OCI-LY7 (cell line): ENCODE measurements at regions of chr2 and their contacts with region 1.

Region 1: GRCh38 chr2:11829947-11830707 is 83.7 kb downstream of the LPIN1 start:
- DNase-seq: peak; percentile 83
- H3K4me3 ChIP-seq: peak overlapping the region; percentile 46
- H3K27ac ChIP-seq: peak overlapping the region; percentile 81
- H3K4me1 ChIP-seq: peaks cover 55% of the 10 kb centered on the region
- CTCF ChIP-seq: no peak

Region 2: DNA sequence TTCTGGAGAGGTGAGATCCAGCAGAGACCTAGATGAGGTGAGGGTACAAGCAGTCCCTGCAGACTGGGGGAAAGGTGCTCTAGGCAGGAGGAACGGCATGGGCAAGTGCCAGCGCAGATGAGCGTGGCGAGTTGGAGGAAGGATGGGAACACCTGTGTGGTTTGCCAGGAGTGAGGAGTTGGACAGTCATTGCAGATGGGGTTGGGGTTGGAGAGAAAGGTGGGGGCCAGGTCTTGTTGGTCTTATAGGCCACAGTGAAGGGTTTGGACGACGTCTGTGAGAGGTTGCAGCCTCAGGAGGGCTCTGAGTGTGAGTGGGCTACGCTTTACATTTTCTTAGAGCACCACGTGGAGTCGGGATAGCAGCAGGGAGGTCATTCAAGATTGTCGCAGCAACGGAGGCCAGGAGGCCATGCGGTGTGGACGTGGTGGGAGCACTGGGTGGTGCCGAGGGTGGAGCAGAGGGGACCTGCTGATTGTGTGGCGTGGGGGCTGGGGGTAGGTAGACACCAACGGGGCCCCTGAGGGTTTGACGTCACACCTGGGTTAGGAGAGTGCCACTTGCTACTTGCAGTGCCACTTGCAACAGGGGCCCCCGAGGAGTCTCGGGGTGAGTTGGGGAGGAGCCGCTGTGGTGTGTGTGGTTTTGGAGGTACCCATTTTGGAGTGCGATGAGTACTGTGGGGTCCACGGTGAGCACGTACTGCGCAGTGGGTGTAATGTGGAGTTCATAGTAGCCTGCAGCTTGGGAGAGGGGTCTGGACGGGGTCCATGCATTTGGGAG is 17.5 kb before region 1 on chr2:
- CTCF ChIA-PET with region 1: no interaction called
- POLR2A ChIA-PET with region 1: no interaction called
- intact Hi-C with region 1: no loop called
- DNase-seq: no peak
- H3K4me3 ChIP-seq: no peak overlapping the region
- H3K27ac ChIP-seq: no peak overlapping the region
- H3K4me1 ChIP-seq: no peaks in the 10 kb centered on the region
- CTCF ChIP-seq: no peak

Region 3: GRCh38 chr2:12032398-12032797 is 202.3 kb after region 1 on chr2:
- CTCF ChIA-PET with region 1: no interaction called
- POLR2A ChIA-PET with region 1: interaction called, 7 read pairs
- intact Hi-C with region 1: loop called (anchors 1 kb)
- DNase-seq: peak; percentile 97
- H3K4me3 ChIP-seq: peak overlapping the region; percentile 45
- H3K27ac ChIP-seq: peak overlapping the region; percentile 98
- H3K4me1 ChIP-seq: peaks cover 88% of the 10 kb centered on the region
- CTCF ChIP-seq: peak; percentile 81

Region 4: GRCh38 chr2:12127638-12128037 is 297.5 kb after region 1 on chr2:
- CTCF ChIA-PET with region 1: no interaction called
- POLR2A ChIA-PET with region 1: no interaction called
- intact Hi-C with region 1: loop called (anchors 1 kb)
- DNase-seq: peak; percentile 72
- H3K4me3 ChIP-seq: peak overlapping the region; percentile 35
- H3K27ac ChIP-seq: peak overlapping the region; percentile 58
- H3K4me1 ChIP-seq: peaks cover 34% of the 10 kb centered on the region
- CTCF ChIP-seq: no peak

Region 5: GRCh38 chr2:12430407-12431133 is 600.4 kb after region 1 on chr2:
- CTCF ChIA-PET with region 1: no interaction called
- POLR2A ChIA-PET with region 1: no interaction called
- intact Hi-C with region 1: loop called (anchors 10 kb)
- DNase-seq: peak; percentile 1
- H3K4me3 ChIP-seq: no peak overlapping the region
- H3K27ac ChIP-seq: no peak overlapping the region
- H3K4me1 ChIP-seq: no peaks in the 10 kb centered on the region
- CTCF ChIP-seq: no peak

Region 6: DNA sequence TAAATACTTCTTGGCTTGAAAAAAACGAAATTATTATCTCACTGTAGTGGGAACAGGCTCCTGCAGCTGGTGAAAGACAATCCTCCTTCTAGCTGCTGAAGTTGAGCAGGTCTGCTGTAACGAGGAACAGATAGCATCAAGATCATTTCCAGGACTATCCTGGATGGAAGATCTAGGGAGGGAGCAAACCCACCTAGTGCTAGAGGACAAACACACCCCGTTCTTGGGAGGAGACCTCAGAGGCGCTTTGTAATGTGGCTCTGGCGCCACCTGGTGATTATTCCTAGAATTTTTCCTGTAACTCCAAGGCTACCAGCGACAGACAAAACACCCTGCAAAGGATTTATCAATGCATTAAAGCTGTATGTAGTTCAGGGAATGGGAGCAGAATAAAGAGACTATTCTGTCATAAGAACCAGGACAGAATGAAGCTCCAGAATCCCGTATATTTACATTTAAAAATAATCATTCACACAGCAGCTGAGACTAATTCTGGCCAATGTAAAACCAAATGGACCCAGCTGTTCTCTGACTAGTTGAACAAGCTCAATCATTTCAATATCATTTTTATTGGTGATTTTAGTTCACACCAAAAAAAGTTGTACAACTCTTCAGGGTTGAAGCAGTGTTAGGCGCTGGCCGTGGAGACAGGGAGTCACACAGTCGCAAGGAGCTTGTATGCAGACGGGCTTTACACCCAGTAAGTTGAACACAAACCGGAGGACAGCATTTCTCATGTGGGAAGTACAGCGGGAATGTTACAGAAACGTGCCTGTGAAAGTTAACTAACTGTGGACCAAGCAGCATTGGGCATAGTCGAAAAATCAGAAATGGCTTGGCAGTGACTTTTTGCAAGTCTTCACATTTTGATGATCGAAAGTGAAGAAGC is 1176.9 kb after region 1 on chr2:
- CTCF ChIA-PET with region 1: no interaction called
- POLR2A ChIA-PET with region 1: no interaction called
- intact Hi-C with region 1: loop called (anchors 2 kb)
- DNase-seq: peak; percentile 61
- H3K4me3 ChIP-seq: no peak overlapping the region
- H3K27ac ChIP-seq: no peak overlapping the region
- H3K4me1 ChIP-seq: no peaks in the 10 kb centered on the region
- CTCF ChIP-seq: peak; percentile 90